Ovary (tissue), 10 donors: ENCODE measurements at regions of chr6 and their contacts with region 1.

Region 1: DNA sequence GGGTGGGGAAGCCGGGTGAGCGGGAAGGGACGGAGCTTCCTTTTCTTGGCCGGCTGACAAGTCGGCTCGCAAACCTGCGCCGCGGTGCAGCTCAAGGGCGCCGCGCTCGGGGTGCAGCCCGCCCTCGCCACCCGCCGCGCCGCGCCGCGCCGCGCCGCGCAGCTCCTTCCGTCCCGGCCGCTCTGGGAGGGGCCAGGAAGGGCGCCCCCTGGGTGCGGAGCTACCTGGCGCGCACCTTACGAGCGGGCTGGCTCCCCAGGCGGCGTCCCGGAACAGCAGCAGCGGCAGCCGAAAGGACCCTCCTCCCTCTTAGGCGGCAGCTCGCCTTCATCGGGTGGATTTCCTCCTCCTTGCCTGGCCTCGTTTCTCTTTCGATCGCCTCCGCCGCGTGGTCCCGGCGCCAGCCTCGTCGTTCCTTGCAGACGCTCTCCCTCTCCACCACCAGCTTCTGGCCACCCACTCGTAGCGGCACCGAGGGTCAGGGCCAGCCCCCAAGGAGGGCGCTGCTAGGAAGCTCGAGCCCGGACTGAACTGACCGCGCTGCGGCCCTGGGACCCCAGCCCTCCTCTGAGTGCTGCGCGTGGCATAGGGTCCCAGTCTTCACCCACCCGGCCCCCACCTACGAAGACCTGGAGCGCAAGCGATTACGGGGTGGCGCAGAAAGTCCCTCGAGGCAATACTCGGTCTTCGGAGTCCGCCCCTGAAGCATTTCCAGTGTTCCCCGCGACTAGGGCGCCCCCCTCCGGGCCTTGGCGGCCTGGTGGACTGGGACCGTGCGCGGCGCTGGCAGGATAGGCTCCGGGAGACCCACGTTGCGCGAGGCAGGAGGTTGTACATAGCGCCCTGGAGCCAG is at the start of gene MAP3K5:
- DNase-seq: peak; percentile 93 to 96 (median 95)
- H3K4me3 ChIP-seq: peak within 1 kb of the TSS; percentile 63
- H3K27ac ChIP-seq: peak within 1 kb of the TSS; percentile 85 to 98
- H3K4me1 ChIP-seq: peaks cover under 1% of the 10 kb centered on the region
- H3K27me3 ChIP-seq: no peaks in the 10 kb centered on the region
- CTCF ChIP-seq: peak; percentile 46 to 92 (median 71)
- EP300 ChIP-seq: no peak
- POLR2A ChIP-seq: peak; percentile 46
- total RNA-seq, gene MAP3K5: 37.0 to 217 (median 92.0) TPM

Region 2: GRCh38 chr6:136582711-136583471 is 209.7 kb before region 1 on chr6:
- intact Hi-C with region 1: loop called in 2 of 4 experiments (anchors 5 to 10 kb)
- DNase-seq: no peak
- H3K4me3 ChIP-seq: no peak overlapping the region
- H3K27ac ChIP-seq: peak overlapping the region; percentile 51 to 64
- H3K4me1 ChIP-seq: peaks cover 8% of the 10 kb centered on the region
- H3K27me3 ChIP-seq: no peaks in the 10 kb centered on the region
- CTCF ChIP-seq: peak; percentile 22 to 70 (median 60)
- EP300 ChIP-seq: no peak
- POLR2A ChIP-seq: no peak

Region 3: DNA sequence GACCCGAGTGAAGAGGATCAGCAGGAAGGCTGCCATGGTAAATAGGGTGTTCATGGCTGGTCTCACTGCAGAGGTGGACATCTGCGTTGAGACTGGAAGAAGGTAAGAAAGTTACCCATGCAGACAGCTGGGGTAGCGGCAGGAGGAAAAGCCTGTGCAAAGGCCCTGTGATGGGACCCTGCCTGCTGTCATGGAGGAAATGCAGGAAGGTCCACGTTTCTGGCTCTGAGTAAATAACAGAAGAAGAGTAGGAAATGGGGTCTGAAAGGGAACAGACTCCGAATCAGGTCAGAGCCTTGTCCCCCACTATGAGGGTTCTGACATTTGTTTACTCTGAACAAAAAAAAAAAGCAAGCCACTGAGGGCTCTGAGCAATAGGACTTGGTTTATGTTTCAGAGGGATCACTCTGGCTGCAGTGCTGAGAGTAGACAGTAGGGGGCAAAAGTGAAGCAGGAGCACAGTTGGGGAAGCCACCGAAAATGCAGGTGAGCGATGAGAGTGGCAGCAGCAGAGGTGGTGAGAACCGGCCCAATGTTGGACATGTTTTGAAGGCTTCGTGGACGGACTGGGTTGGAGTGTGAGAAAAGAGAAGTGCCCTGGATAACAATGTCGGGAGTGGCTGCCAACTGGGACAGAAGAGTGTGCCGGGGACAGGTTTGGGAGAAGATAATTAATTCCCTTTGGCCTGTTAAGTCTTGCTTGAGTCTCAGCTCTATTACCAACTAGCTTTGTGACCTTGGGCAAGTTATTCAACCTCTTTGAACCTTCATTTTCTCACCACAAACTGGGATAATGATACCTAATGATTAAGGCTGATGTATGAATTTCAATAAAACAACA is 184.5 kb before region 1 on chr6:
- intact Hi-C with region 1: loop called in 1 of 4 experiments (anchors 10 kb)
- DNase-seq: peak in 3 of 5 donors; percentile 42 to 66 (median 62)
- H3K4me3 ChIP-seq: no peak overlapping the region
- H3K27ac ChIP-seq: no peak overlapping the region
- H3K4me1 ChIP-seq: peaks cover 18% of the 10 kb centered on the region
- H3K27me3 ChIP-seq: no peaks in the 10 kb centered on the region
- CTCF ChIP-seq: peak in 2 of 3 donors; percentile 23 to 32
- EP300 ChIP-seq: no peak
- POLR2A ChIP-seq: no peak

Region 4: DNA sequence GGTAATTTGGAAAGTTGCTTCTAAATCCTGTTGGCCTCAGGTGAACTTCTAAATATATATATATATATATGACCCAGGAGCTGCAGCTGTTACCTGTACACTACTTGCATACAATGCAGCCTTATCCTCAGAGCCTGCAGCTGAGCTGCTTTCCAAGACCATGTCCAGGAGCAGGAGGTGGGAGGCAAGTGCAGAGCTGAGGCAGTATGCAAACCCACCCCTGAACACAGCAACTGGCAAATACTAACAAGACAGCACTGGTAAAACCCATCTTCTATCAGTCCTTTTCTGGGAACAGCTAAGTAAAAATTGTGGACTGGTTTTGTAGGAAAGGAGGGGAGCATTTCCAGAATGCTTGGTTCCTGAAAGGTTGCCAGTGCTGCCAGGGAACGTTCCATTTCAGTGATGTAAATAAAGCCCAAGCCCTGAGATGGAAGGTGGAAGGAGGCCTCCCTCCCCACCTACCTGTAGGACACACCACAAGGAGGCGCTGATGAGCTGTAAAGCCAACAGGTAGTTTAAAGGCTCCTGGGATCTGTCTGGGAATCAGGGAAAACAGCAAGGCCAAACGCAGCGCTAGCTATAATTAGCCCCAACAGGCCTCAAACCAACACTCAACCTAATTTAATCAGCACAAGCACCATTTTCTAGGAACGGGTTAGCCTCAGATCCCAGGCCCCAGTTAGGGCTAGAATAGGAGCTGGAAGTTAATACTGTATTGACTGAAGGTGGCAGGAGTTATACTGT is 148.6 kb before region 1 on chr6:
- intact Hi-C with region 1: loop called (anchors 1 to 2 kb)
- DNase-seq: peak; percentile 92 to 98 (median 95)
- H3K4me3 ChIP-seq: no peak overlapping the region
- H3K27ac ChIP-seq: peak overlapping the region; percentile 49 to 55
- H3K4me1 ChIP-seq: peaks cover 14% of the 10 kb centered on the region
- H3K27me3 ChIP-seq: no peaks in the 10 kb centered on the region
- CTCF ChIP-seq: peak; percentile 79 to 93 (median 82)
- EP300 ChIP-seq: no peak
- POLR2A ChIP-seq: no peak

Region 5: DNA sequence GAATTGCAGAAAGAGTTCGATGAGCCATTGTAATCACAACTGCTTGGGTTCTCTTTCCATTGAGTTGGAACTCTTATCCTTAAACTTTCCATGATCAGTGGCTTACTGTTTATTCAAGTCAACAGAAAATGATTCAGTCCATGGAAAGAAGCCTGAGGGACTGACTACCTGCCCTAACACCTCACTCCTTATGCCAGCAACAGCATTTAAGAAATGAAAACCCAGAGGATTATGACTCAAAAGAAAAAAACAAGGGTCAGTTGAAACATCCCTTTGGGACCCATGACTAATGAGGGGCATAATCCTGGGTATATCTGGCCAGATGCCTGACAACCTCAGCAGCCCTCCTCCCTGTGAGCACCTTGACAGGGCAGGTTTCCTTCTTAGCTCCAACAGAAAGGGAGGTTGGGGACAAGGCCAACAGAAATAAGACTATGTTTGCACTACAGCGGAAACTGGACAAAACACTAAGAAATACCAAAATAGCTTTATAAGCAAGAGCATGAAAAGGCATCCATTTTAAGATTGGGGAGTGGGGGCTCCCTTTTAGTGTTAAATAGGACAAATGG is 107.0 kb before region 1 on chr6:
- intact Hi-C with region 1: loop called in 1 of 4 experiments (anchors 5 kb)
- DNase-seq: no peak
- H3K4me3 ChIP-seq: no peak overlapping the region
- H3K27ac ChIP-seq: peak overlapping the region; percentile 22 to 70
- H3K4me1 ChIP-seq: peaks cover 15% of the 10 kb centered on the region
- H3K27me3 ChIP-seq: no peaks in the 10 kb centered on the region
- CTCF ChIP-seq: no peak
- EP300 ChIP-seq: no peak
- POLR2A ChIP-seq: no peak

Region 6: DNA sequence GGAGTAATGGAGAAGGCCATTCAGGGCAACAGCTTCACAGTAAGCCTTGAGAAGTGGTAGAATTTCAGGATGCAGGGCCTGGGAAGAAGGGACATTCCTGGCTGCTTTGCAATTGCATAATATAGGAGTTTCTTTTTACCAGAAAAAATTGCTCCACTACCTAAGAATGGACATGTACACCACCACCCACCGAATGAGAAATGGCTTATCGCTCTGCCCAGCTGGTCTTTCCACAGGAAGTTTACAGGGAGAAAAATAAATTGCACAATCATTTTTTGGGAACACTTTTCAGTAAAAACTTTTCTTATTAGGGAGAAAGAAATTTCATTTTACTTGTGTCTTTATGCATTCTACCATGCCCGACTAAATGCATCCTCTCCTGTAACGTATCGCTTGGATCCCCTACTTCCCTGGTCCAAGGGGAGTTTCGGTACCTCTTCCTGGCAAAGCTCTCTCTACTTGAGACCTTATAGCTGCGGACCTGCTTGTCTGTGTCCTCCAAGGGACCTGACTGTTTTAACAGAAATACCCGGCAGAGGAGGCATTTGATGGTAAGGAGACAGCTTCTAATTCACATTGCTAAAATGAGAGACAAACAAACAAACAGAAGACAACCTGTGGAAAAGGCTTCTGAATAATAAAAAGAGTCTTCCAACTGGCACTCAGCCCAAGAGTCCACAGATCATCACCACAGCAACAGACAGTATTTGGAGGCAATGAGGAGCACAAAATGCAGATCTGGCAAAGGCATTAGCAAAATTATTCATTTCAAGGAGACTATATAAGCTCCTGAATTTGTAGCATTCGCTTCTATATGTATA is 54.6 kb before region 1 on chr6:
- intact Hi-C with region 1: loop called in 1 of 4 experiments (anchors 2 kb)
- DNase-seq: peak in 4 of 5 donors; percentile 55 to 79 (median 60)
- H3K4me3 ChIP-seq: no peak overlapping the region
- H3K27ac ChIP-seq: peak overlapping the region in 1 of 2 donors; percentile 40
- H3K4me1 ChIP-seq: peaks cover 31% of the 10 kb centered on the region
- H3K27me3 ChIP-seq: no peaks in the 10 kb centered on the region
- CTCF ChIP-seq: no peak
- EP300 ChIP-seq: no peak
- POLR2A ChIP-seq: no peak